ENCODE measurements at regions of chr11 and their contacts with region 1.

Region 1: DNA sequence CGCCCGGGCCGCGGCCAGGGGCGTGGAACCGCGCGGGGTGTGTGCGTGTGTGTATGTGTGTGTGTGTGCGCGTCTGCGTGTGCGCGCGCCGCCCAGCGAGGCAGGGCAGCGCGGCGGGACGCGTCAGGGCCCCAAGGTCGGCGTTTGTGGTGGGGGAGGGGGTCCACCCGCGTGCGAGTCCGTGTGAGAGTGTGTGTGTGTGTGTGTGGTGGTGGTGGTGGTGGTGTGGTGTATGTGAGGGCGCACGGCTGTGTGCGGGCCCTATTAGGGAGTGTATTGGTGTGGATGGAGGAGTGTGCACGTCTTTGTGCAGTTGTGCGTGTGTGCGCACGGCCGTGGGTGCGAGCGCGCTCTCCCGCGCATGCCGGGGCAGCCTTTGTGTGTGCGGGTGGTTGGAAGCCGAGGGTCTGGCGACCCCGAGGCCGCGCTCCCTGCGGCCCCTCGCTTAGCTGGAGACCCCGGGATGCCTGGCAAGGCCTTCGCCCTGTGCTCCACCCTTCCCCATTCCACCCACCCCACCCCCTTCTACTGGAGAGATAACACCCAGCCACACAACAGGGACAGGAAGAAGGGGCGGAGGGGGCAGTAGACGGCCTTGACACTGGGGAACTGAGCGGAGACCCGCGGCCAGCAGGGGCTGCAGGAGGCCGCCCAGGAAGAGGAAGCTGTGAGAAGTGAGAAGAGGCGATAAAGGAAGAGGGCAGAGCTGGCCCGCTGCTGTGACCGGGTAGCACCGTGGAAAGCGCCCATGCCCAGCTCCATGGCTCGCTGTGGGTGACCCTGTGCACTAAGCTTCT is 528 bp upstream of the ARRB1 start:
- DNase-seq: peak in 1 of 2 experiments; percentile 30
- ATAC-seq: peak; percentile 56 to 65
- H3K4me3 ChIP-seq: peak overlapping the region; percentile 77
- H3K27ac ChIP-seq: peak overlapping the region; percentile 77 to 93
- H3K4me1 ChIP-seq: peaks cover 47% of the 10 kb centered on the region
- CTCF ChIP-seq: no peak
- EP300 ChIP-seq: no peak
- POLR2A ChIP-seq: peak; percentile 31; the same call in 1 of the 2 replicates
- RAD21 ChIP-seq: no peak

Region 2: GRCh38 chr11:75328426-75329277 is 23.3 kb before region 1 on chr11:
- CTCF ChIA-PET with region 1: interaction called, 14 read pairs
- POLR2A ChIA-PET with region 1: no interaction called
- DNase-seq: peak; percentile 85 to 86
- ATAC-seq: peak; percentile 94 to 95
- H3K4me3 ChIP-seq: no peak overlapping the region
- H3K27ac ChIP-seq: peak overlapping the region; percentile 17 to 57; a peak in 5 of 6 replicates
- H3K4me1 ChIP-seq: peaks cover 62% of the 10 kb centered on the region
- CTCF ChIP-seq: peak; percentile 85
- EP300 ChIP-seq: no peak
- POLR2A ChIP-seq: no peak
- RAD21 ChIP-seq: peak; percentile 96 to 98

Region 3: GRCh38 chr11:75380711-75381420 is 28.9 kb after region 1 on chr11:
- CTCF ChIA-PET with region 1: interaction called, 24 read pairs
- POLR2A ChIA-PET with region 1: no interaction called
- DNase-seq: peak in 1 of 2 experiments; percentile 63
- ATAC-seq: peak; percentile 37 to 45; a peak in 5 of 6 replicates
- H3K4me3 ChIP-seq: no peak overlapping the region
- H3K27ac ChIP-seq: peak overlapping the region; percentile 50 to 62; a peak in 5 of 6 replicates
- H3K4me1 ChIP-seq: peaks cover 33% of the 10 kb centered on the region
- CTCF ChIP-seq: no peak
- EP300 ChIP-seq: no peak
- POLR2A ChIP-seq: no peak
- RAD21 ChIP-seq: no peak

Measured in A549 (cell line).